IMR-90 (cell line): ENCODE measurements at regions of chr3 and their contacts with region 1.

Region 1: DNA sequence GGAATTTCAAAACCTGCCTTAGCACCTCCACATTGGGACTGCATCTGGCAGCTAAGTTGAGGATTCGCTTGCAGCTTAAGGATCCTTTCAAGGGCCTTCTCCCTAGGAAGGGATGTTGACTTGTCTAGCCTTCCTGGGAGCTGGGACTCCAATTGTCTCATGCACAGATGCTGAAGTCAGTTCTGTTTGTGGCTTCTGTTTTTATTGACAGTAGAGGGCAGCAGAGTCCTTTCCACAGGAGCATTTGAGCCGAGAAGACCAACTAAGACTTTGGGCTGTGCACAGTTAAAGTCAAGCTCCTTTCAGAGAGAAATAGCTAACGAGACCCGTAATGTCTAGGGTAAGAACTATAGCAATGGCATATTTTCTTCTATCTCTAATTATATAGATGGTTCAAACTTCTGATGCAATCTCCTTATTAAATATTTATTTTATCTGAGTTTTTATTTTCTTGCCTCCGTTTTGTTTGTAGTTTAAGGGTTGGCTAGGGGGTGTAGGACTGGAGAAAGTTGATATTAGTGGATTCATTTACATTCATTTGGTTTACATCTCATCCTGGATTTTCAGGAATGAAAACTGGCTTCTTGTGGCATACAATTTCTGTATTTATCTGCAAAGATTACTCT is 59.7 kb upstream of the KBTBD8 start:
- DNase-seq: peak; percentile 67
- ATAC-seq: peak; percentile 100
- H3K4me3 ChIP-seq: no peak overlapping the region
- H3K27ac ChIP-seq: no peak overlapping the region
- H3K4me1 ChIP-seq: no peaks in the 10 kb centered on the region
- H3K27me3 ChIP-seq: peaks cover 2% of the 10 kb centered on the region
- CTCF ChIP-seq: peak; percentile 74
- POLR2A ChIP-seq: no peak
- RAD21 ChIP-seq: peak; percentile 77

Region 2: GRCh38 chr3:66276705-66277274 is 661.7 kb before region 1 on chr3:
- CTCF ChIA-PET with region 1: no interaction called
- POLR2A ChIA-PET with region 1: no interaction called
- dilution Hi-C with region 1: no loop called
- in situ Hi-C with region 1: no loop called
- intact Hi-C with region 1: loop called (anchors 2 kb)
- DNase-seq: peak; percentile 85
- ATAC-seq: peak; percentile 71
- H3K4me3 ChIP-seq: no peak overlapping the region
- H3K27ac ChIP-seq: no peak overlapping the region
- H3K4me1 ChIP-seq: peaks cover 4% of the 10 kb centered on the region
- H3K27me3 ChIP-seq: no peaks in the 10 kb centered on the region
- CTCF ChIP-seq: peak; percentile 82
- POLR2A ChIP-seq: no peak
- RAD21 ChIP-seq: peak; percentile 87

Region 3: DNA sequence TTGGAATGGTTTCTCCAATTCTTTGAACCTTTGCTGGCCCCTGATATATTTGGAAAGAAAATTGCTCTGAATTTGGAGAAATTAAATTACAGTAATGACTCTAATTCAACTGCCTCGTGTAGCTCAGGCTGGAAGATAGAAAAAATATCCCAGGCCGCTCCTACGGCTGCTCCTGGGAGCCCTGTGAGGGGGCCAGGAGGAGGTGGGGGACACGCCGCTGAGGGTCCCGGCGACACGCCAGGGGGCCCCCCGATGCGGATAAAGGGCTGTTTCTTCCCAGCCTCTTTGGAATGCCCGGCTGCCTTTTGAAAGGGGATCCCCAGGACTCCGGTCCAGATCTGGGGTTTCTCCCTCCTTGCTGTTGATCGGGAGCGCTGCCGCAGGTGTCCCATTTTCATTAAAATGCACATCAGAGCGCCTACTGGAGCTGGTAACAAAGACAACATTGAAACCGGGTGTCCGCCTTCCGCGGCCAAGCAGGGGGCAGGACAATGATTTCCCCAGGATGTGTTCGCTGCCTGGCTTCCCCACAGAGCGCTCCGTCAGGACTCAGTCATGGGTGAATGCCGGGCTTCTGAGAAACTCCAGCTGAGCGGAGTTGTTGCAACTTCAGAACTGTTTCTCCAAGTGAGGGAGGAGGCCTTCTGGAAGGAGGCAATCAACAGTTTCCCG is 140.4 kb before region 1 on chr3:
- CTCF ChIA-PET with region 1: no interaction called
- POLR2A ChIA-PET with region 1: no interaction called
- dilution Hi-C with region 1: no loop called
- in situ Hi-C with region 1: no loop called
- intact Hi-C with region 1: no loop called
- DNase-seq: peak; percentile 82
- ATAC-seq: peak; percentile 55
- H3K4me3 ChIP-seq: no peak overlapping the region
- H3K27ac ChIP-seq: peak overlapping the region; percentile 62
- H3K4me1 ChIP-seq: peaks cover 30% of the 10 kb centered on the region
- H3K27me3 ChIP-seq: no peaks in the 10 kb centered on the region
- CTCF ChIP-seq: no peak
- POLR2A ChIP-seq: no peak
- RAD21 ChIP-seq: no peak

Region 4: GRCh38 chr3:66971891-66972551 is 33.6 kb after region 1 on chr3:
- CTCF ChIA-PET with region 1: interaction called, 9 read pairs
- POLR2A ChIA-PET with region 1: no interaction called
- dilution Hi-C with region 1: no loop called
- in situ Hi-C with region 1: no loop called
- intact Hi-C with region 1: loop called (anchors 2 kb)
- DNase-seq: peak; percentile 70
- ATAC-seq: peak; percentile 99
- H3K4me3 ChIP-seq: peak overlapping the region; percentile 26
- H3K27ac ChIP-seq: no peak overlapping the region
- H3K4me1 ChIP-seq: no peaks in the 10 kb centered on the region
- H3K27me3 ChIP-seq: peaks cover 5% of the 10 kb centered on the region
- CTCF ChIP-seq: peak; percentile 87
- POLR2A ChIP-seq: peak; percentile 51; the same call in 1 of the 2 replicates
- RAD21 ChIP-seq: peak; percentile 95

Region 5: DNA sequence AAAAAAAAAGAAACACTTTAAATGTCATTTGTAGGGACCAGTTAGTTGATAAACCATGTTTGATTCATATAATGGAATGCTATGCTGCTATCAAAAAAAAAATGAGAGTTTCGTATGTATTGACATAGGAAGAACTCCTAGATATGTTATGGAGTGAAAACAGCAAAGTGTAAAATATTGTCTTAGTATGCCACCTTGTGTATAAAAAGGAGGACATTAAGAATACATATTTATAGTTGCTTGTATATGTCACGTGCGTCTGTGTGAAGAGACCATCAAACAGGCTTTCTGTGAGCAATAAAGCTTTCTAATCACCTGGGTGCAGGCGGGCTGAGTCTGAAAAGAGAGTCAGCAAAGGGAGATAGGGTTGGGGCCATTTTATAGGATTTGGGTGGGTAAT is 99.2 kb after region 1 on chr3:
- CTCF ChIA-PET with region 1: interaction called, 3 read pairs
- POLR2A ChIA-PET with region 1: no interaction called
- dilution Hi-C with region 1: no loop called
- in situ Hi-C with region 1: no loop called
- intact Hi-C with region 1: loop called (anchors 1 kb)
- DNase-seq: peak; percentile 35
- ATAC-seq: peak; percentile 48; the same call in 1 of the 2 replicates
- H3K4me3 ChIP-seq: no peak overlapping the region
- H3K27ac ChIP-seq: no peak overlapping the region
- H3K4me1 ChIP-seq: no peaks in the 10 kb centered on the region
- H3K27me3 ChIP-seq: no peaks in the 10 kb centered on the region; the same call in none of the 2 replicates
- CTCF ChIP-seq: peak; percentile 44
- POLR2A ChIP-seq: no peak
- RAD21 ChIP-seq: peak; percentile 54

Region 6: DNA sequence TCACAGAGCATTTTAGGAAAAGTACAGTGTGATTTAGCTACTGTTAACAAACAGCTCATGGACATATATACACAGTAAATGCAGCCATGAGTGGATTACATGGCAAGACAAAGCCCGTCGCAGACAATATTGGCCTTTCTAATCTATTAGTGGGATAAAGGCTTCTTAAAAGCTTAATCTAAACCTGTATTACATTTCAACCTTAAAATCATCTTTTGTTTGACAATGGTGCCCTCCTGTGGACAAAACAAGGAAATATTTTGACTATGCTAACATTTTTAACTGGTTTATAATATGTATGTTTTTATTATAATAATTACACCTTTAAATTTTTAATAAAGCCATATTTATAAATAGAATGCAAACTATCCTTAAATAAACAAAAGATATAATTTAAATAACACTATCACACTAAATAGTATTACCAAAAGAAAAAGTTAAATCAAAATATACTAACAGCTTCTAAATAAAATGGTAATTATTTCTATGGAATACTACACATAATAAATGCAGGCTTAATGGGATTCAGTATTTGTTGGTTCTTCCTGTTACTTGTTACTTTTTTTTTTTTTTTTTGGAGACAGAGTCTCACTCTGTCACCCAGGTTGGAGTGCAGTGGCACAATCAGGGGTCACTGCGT is 1955.3 kb after region 1 on chr3:
- CTCF ChIA-PET with region 1: interaction called, 9 read pairs
- POLR2A ChIA-PET with region 1: no interaction called
- dilution Hi-C with region 1: no loop called
- in situ Hi-C with region 1: loop called (anchors 25 kb)
- intact Hi-C with region 1: loop called (anchors 5 kb)
- DNase-seq: peak; percentile 44
- ATAC-seq: peak; percentile 51; the same call in 1 of the 2 replicates
- H3K4me3 ChIP-seq: no peak overlapping the region
- H3K27ac ChIP-seq: no peak overlapping the region
- H3K4me1 ChIP-seq: no peaks in the 10 kb centered on the region
- H3K27me3 ChIP-seq: 0 out of 2 replicates have a peak, but pooled peaks cover 1% of the 10 kb centered on the region
- CTCF ChIP-seq: peak; percentile 45
- POLR2A ChIP-seq: no peak
- RAD21 ChIP-seq: peak; percentile 41